IMR-90 (cell line): ENCODE measurements at regions of chr3 and their contacts with region 1.

Region 1: DNA sequence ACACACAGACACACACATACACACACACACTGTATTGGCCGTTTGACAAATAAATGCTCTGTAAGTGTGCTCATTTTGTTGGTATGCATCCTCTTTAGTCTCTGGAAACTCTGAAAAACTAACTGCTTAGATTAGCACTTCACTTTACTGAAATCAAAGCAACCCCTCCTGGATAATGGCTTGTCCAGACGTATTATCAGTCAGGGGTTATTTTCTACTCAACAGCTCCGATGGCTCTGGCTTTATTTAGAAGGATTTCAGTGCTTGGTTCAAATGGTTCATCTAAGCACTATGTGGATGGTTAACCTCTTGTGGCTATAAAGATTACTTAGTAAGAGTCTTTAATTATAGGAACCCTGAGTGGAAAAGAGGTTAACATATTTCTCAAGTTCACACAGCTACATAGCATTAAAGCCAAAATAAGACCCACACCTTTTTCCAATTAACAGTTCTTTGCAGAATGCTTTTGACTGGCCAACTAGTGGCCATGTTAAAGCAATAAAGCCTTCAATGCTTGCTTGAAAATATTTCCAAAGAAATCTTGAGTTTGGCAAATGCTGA is 516.1 kb upstream of the NAALADL2 start:
- DNase-seq: peak; percentile 78
- ATAC-seq: peak; percentile 77
- H3K4me3 ChIP-seq: no peak overlapping the region
- H3K27ac ChIP-seq: no peak overlapping the region
- H3K4me1 ChIP-seq: peaks cover 2% of the 10 kb centered on the region; the same call in 1 of the 2 replicates
- H3K27me3 ChIP-seq: no peaks in the 10 kb centered on the region
- CTCF ChIP-seq: no peak
- POLR2A ChIP-seq: no peak
- RAD21 ChIP-seq: no peak

Region 2: DNA sequence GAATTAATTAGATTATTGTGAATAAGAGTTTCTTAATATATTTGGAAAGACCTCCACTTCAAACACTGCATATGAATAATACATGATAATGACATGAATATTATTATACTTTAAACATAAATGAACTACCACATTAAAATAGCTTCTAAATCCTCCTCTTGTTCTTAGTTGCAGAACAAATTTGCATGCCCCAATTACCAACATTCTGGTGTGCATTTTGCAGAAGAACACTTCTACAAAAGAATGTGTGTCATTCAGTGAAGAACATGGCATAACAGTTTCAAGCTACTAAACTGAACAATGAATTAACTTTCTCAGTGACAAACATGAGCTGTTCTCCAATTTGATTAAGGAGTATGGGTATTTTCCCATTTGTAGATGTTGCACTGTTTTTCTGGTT is 195.2 kb before region 1 on chr3:
- CTCF ChIA-PET with region 1: no interaction called
- POLR2A ChIA-PET with region 1: interaction called, 13 read pairs
- dilution Hi-C with region 1: no loop called
- in situ Hi-C with region 1: no loop called
- intact Hi-C with region 1: no loop called
- DNase-seq: no peak
- ATAC-seq: no peak
- H3K4me3 ChIP-seq: no peak overlapping the region
- H3K27ac ChIP-seq: no peak overlapping the region
- H3K4me1 ChIP-seq: no peaks in the 10 kb centered on the region
- H3K27me3 ChIP-seq: no peaks in the 10 kb centered on the region
- CTCF ChIP-seq: no peak
- POLR2A ChIP-seq: no peak
- RAD21 ChIP-seq: no peak